ENCODE measurements at regions of chr6 and their contacts with region 1.

Region 1: DNA sequence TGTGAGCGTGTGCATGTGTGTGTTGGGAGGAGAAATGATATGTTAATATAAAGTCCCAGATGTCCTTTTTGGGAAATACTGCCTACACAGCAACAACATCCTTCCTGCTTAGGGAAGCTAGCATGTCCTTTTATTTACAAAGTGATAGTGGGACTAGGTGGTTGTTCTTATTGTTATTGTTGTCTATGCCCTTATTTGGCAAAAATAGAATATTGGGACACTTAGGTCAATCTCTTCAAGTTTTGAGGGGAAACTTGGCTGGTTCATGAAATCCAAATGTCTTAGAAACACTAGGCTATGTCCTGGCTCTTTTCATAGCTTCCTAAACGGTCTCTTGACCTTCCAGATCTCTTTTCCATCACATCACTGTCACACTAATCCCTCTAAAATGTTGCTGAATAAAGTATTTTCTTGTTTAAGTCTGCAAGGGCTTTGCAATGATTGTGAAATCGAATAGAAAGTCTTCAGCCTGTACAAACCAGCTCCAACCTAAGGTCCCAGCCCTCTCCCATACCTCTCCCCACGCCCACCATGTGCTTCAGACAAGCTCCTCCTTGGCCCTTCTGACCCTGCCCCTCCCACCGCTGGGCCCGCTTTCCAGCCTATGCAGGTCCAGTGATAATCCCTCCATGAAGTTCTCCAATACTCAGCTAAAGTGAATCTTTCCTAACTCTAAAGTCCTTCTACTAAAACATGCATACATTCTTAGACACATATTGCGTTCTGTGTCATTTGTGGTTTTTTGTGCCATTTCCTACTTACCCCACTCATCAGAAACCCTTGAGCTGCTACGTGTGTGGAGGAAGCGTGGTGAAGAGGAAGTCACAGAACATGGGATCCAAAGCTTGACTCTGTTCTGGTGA is 205.1 kb downstream of the LY86 start:
- DNase-seq: no peak
- H3K4me3 Mint-ChIP-seq: peak overlapping the region; percentile 41
- H3K27ac Mint-ChIP-seq: peak overlapping the region; percentile 23
- H3K4me1 Mint-ChIP-seq: peaks cover 55% of the 10 kb centered on the region
- H3K27me3 Mint-ChIP-seq: no peaks in the 10 kb centered on the region

Region 2: DNA sequence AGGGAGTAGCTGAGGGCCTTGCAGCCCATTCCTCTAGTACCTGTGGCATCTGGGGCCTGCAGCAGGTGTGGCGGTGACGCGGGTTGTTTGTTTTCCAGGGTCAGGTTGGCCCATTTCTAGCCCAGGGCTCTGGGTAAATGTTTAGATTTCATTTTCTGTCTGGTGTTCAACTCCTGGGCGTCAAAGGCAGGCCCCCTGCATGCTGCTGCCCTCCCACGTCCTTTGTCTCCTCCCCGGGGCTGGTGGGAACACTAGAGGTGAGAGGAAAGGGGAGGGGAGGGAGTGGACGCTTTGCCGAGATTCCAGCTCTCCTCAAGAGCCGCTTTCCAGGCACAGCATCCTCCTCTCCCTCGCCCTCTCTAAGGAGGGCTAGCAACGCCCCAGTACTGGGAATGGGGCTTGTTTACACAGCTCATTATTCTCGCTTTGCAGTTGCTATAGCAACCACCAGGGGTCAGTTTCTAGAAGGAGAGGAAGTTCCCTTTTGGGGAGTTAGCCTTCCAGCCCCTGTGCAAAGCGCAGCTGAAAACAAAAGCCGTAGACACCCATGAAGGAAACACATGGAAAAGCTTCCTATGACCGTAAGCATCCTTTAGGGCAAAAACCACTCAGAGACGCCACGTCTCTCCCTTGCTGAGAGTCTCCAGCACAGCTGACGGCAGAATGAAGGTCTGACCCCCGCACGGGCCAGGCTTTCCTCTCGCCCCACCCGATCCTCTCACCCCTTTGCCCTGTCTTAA is 34.5 kb before region 1 on chr6:
- intact Hi-C with region 1: loop called (anchors 5 kb)
- DNase-seq: no peak
- H3K4me3 Mint-ChIP-seq: no peak overlapping the region
- H3K27ac Mint-ChIP-seq: no peak overlapping the region
- H3K4me1 Mint-ChIP-seq: peaks cover 3% of the 10 kb centered on the region
- H3K27me3 Mint-ChIP-seq: peaks cover 27% of the 10 kb centered on the region

Region 3: DNA sequence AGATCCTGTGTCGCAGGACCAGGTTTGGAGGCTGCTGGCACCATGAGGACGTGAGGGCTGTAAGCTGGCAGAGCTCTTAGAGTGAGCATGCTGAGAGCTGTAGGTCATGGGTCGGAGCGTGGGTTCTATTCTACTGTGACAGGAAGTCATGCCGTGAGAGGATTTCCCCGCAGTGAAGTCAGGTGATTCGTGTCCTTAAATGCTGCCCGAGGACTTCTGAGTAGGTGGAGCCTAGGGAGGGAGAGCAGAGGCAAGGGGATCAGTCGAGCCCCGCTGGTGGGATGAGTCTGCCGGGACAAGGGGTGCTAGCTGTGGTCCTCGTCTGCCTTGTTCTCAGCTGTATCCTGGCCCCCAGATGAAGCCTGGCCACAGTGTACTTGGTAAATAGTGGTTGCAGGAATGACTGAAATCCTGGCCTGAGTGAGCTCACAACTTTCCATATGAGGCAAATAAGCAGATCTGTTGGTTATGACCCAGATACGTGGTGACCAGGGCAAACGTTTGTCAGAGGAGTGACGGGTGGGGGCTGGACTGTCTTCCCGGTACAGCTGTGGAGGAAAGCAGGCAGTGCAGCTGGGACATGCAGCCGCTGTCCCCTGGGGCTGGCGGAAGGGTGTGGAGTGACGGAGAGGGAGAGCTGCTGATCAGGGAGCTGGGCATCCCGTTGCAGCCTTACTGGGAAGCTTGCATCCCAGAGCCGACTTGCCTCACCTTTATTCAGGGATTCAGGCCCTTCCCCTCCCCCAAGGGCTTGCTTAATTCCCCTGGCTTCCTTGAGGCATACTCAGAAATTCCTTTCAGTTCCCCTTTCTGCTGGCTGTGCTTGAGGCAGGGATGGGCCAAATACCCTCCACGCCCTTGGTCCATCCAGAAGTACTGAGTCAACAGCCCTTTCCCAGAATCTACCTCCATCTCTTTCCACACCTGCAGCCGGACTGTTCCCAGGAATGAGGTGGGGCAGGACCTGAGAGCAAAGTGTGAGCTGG is 63.2 kb after region 1 on chr6:
- intact Hi-C with region 1: loop called (anchors 1 kb)
- DNase-seq: peak; percentile 33
- H3K4me3 Mint-ChIP-seq: peak overlapping the region; percentile 55
- H3K27ac Mint-ChIP-seq: peak overlapping the region; percentile 93
- H3K4me1 Mint-ChIP-seq: peaks cover 41% of the 10 kb centered on the region
- H3K27me3 Mint-ChIP-seq: no peaks in the 10 kb centered on the region

Region 4: DNA sequence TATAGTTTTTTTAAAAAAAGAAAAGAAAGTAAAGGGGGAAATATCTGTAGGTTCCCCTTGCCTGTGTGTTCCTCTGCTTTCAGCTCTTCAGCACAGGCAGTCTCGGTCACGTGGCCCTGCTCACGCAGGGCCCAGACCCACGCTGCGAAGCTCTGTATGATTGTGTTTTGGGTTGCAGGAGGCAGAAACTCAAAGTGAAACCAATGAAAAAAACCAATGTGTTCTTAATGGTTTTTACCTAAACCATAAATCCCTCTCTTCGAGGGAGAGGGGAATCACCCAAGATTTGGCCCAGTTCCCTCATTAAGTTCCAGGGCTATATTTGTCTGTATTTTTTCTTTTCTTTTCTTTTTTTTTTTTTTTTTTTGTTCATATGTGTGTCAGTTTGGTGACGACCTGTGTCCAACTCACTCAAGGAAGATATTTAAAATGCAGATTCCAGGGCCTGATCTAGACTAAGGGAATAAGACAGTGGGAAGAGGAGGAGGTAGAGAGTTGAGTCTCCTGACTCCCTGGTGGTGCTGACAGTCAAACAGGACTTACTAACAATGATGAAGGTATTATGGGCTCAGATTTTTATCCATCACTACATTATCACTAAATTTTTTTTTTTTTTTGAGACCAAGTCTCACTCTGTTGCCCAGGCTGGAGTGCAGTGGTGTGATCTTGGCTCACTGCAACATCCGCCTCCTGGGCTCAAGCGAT is 280.4 kb after region 1 on chr6:
- intact Hi-C with region 1: loop called (anchors 10 kb)
- DNase-seq: peak; percentile 57
- H3K4me3 Mint-ChIP-seq: no peak overlapping the region
- H3K27ac Mint-ChIP-seq: no peak overlapping the region
- H3K4me1 Mint-ChIP-seq: peaks cover 17% of the 10 kb centered on the region
- H3K27me3 Mint-ChIP-seq: peaks cover 60% of the 10 kb centered on the region